Naive thymus-derived CD4-positive, alpha-beta T cell (primary cell): ENCODE measurements at regions of chr15 and their contacts with region 1.

Region 1: GRCh38 chr15:101723874-101724674 is at the start of gene TARS3:
- DNase-seq: peak; percentile 84 to 97 (median 90)
- ATAC-seq: peak; percentile 97
- H3K4me3 ChIP-seq: peak within 1 kb of the TSS; percentile 77
- H3K4me3 Mint-ChIP-seq: peak within 1 kb of the TSS; percentile 79 to 97 (median 91)
- H3K27ac ChIP-seq: peak within 1 kb of the TSS; percentile 88
- H3K27ac Mint-ChIP-seq: peak within 1 kb of the TSS; percentile 83 to 97 (median 91)
- H3K4me1 ChIP-seq: peaks cover 5 to 11% of the 10 kb centered on the region in 2 donors
- H3K4me1 Mint-ChIP-seq: peaks cover 16 to 42% (median 35%) of the 10 kb centered on the region in 7 donors
- H3K27me3 ChIP-seq: no peaks in the 10 kb centered on the region
- H3K27me3 Mint-ChIP-seq: peaks cover 0 to 3% (median 0%) of the 10 kb centered on the region in 5 donors
- total RNA-seq, gene TARS3: 20.5 to 42.6 (median 23.6) TPM

Region 2: GRCh38 chr15:100438570-100438969 is 1285.5 kb before region 1 on chr15:
- CTCF ChIA-PET with region 1: no interaction called
- POLR2A ChIA-PET with region 1: no interaction called
- intact Hi-C with region 1: no loop called
- DNase-seq: peak in 7 of 9 donors; percentile 20 to 69 (median 57)
- ATAC-seq: no peak
- H3K4me3 ChIP-seq: no peak overlapping the region
- H3K4me3 Mint-ChIP-seq: peak overlapping the region in 2 of 10 donors; percentile 3 to 31
- H3K27ac ChIP-seq: no peak overlapping the region
- H3K27ac Mint-ChIP-seq: peak overlapping the region in 6 of 9 donors; percentile 51 to 88 (median 59)
- H3K4me1 ChIP-seq: no peaks in the 10 kb centered on the region
- H3K4me1 Mint-ChIP-seq: peaks cover 0 to 30% (median 7%) of the 10 kb centered on the region in 7 donors
- H3K27me3 ChIP-seq: no peaks in the 10 kb centered on the region
- H3K27me3 Mint-ChIP-seq: peaks cover 0 to 2% (median 0%) of the 10 kb centered on the region in 5 donors

Region 3: DNA sequence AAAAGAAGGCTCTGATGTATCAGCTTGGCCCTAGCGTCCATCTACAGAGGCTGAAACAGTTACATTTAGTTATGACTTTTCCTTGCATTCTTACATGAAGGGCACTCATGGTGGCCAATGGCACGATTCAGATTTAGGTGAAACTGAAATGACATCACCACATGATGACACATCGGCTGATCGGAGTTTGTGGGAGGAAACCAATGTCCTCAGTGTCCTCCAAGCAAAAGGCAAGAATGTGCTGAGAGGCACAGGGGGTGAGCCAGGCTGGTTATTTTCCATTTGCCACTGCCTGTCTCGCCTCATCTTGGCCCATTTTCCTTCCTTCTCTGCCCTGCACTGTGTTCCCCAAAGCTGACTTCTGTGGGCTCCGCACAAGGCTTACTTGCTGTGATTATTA is 34.2 kb before region 1 on chr15:
- CTCF ChIA-PET with region 1: no interaction called
- POLR2A ChIA-PET with region 1: no interaction called
- intact Hi-C with region 1: loop called in 1 of 2 experiments (anchors 5 kb)
- DNase-seq: no peak
- ATAC-seq: no peak
- H3K4me3 ChIP-seq: no peak overlapping the region
- H3K4me3 Mint-ChIP-seq: peak overlapping the region in 1 of 10 donors; percentile 39
- H3K27ac ChIP-seq: no peak overlapping the region
- H3K27ac Mint-ChIP-seq: no peak overlapping the region
- H3K4me1 ChIP-seq: no peaks in the 10 kb centered on the region
- H3K4me1 Mint-ChIP-seq: peaks cover 2 to 42% (median 12%) of the 10 kb centered on the region in 7 donors
- H3K27me3 ChIP-seq: no peaks in the 10 kb centered on the region
- H3K27me3 Mint-ChIP-seq: no peaks in the 10 kb centered on the region

Region 4: DNA sequence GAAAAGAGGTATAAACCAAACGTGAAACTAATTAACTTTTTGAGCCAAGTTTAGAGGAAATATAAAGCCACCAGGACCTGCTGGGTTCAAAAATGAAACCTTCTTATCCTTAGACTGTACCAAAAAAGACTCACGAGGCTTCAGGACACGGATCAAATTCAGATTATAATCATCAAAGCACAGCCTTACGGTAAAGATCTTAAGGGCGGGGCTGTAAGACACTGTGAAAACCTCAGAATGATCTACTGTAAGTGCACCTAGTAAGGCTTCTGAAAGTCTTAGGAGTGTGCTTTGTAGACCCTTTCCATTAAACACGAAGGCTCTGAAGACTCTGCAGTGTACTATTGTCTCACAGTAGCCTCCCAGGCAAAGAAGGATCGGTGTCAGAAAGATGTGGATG is 26.6 kb before region 1 on chr15:
- CTCF ChIA-PET with region 1: no interaction called
- POLR2A ChIA-PET with region 1: interaction called, 3 read pairs
- intact Hi-C with region 1: loop called (anchors 1 to 2 kb)
- DNase-seq: peak in 7 of 9 donors; percentile 15 to 58 (median 27)
- ATAC-seq: peak; percentile 77
- H3K4me3 ChIP-seq: no peak overlapping the region
- H3K4me3 Mint-ChIP-seq: peak overlapping the region; percentile 70 to 87 (median 75)
- H3K27ac ChIP-seq: peak overlapping the region; percentile 61
- H3K27ac Mint-ChIP-seq: peak overlapping the region; percentile 80 to 99 (median 91)
- H3K4me1 ChIP-seq: peaks cover 0 to 18% of the 10 kb centered on the region in 2 donors
- H3K4me1 Mint-ChIP-seq: peaks cover 16 to 62% (median 44%) of the 10 kb centered on the region in 7 donors
- H3K27me3 ChIP-seq: no peaks in the 10 kb centered on the region
- H3K27me3 Mint-ChIP-seq: no peaks in the 10 kb centered on the region

Region 5: DNA sequence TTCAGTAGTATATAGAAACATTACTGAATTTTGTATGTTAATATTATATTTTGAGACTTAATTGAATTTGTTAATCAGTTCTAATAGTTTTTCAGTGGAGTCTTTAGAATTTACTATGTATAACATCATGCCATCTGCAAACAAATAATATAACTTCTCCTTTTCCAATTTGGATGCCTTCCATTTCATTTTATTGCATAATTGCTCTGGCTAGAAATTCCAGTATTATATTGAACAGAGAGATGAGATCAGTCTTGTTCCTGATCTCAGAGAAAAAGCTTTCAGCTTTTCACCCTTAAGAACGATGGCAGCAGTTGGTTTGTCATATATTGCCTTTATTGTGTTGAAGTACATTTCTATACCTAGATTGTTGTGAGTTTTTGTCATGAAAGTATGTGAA is 128.3 kb after region 1 on chr15:
- CTCF ChIA-PET with region 1: no interaction called
- POLR2A ChIA-PET with region 1: no interaction called
- intact Hi-C with region 1: no loop called
- DNase-seq: no peak
- ATAC-seq: no peak
- H3K4me3 ChIP-seq: no peak overlapping the region
- H3K4me3 Mint-ChIP-seq: no peak overlapping the region
- H3K27ac ChIP-seq: no peak overlapping the region
- H3K27ac Mint-ChIP-seq: no peak overlapping the region
- H3K4me1 ChIP-seq: no peaks in the 10 kb centered on the region
- H3K4me1 Mint-ChIP-seq: no peaks in the 10 kb centered on the region
- H3K27me3 ChIP-seq: no peaks in the 10 kb centered on the region
- H3K27me3 Mint-ChIP-seq: peaks cover 31 to 47% (median 37%) of the 10 kb centered on the region in 5 donors